PC-9 (cell line): ENCODE measurements at regions of chr9 and their contacts with region 1.

Region 1: GRCh38 chr9:136831720-136832104 is 10.6 kb upstream of the AJM1 start:
- DNase-seq: no peak
- H3K4me3 ChIP-seq: no peak overlapping the region
- H3K27ac ChIP-seq: no peak overlapping the region
- H3K4me1 ChIP-seq: no peaks in the 10 kb centered on the region
- H3K27me3 ChIP-seq: no peaks in the 10 kb centered on the region
- CTCF ChIP-seq: no peak

Region 2: GRCh38 chr9:136644598-136645351 is 186.9 kb before region 1 on chr9:
- CTCF ChIA-PET with region 1: no interaction called
- POLR2A ChIA-PET with region 1: no interaction called
- intact Hi-C with region 1: no loop called
- DNase-seq: peak; percentile 65 to 86
- H3K4me3 ChIP-seq: peak overlapping the region; percentile 44; the same call in 1 of the 2 replicates
- H3K27ac ChIP-seq: no peak overlapping the region
- H3K4me1 ChIP-seq: peaks cover 16% of the 10 kb centered on the region
- H3K27me3 ChIP-seq: no peaks in the 10 kb centered on the region
- CTCF ChIP-seq: peak; percentile 95

Region 3: GRCh38 chr9:136820971-136821825 is 10.5 kb before region 1 on chr9:
- CTCF ChIA-PET with region 1: interaction called, 15 read pairs
- POLR2A ChIA-PET with region 1: no interaction called
- intact Hi-C with region 1: no loop called
- DNase-seq: no peak
- H3K4me3 ChIP-seq: no peak overlapping the region
- H3K27ac ChIP-seq: no peak overlapping the region
- H3K4me1 ChIP-seq: no peaks in the 10 kb centered on the region
- H3K27me3 ChIP-seq: no peaks in the 10 kb centered on the region
- CTCF ChIP-seq: no peak

Region 4: GRCh38 chr9:136978073-136978864 is 146.6 kb after region 1 on chr9:
- CTCF ChIA-PET with region 1: no interaction called
- POLR2A ChIA-PET with region 1: no interaction called
- intact Hi-C with region 1: no loop called
- DNase-seq: peak in 1 of 2 experiments; percentile 83
- H3K4me3 ChIP-seq: peak overlapping the region; percentile 38; the same call in 1 of the 2 replicates
- H3K27ac ChIP-seq: no peak overlapping the region
- H3K4me1 ChIP-seq: peaks cover 9% of the 10 kb centered on the region
- H3K27me3 ChIP-seq: no peaks in the 10 kb centered on the region
- CTCF ChIP-seq: no peak